ENCODE measurements at regions of chr3 and their contacts with region 1.

Region 1: GRCh38 chr3:69161587-69162307 is 39.4 kb upstream of the LMOD3 start:
- DNase-seq: no peak
- H3K4me3 ChIP-seq: no peak overlapping the region
- H3K27ac ChIP-seq: no peak overlapping the region
- H3K4me1 ChIP-seq: no peaks in the 10 kb centered on the region; a peak in 1 of 7 replicates
- H3K27me3 ChIP-seq: no peaks in the 10 kb centered on the region
- CTCF ChIP-seq: peak in 2 of 3 experiments; percentile 83 to 84; a peak in 3 of 4 replicates
- EP300 ChIP-seq: no peak
- POLR2A ChIP-seq: no peak
- RAD21 ChIP-seq: peak; percentile 96 to 98

Region 2: DNA sequence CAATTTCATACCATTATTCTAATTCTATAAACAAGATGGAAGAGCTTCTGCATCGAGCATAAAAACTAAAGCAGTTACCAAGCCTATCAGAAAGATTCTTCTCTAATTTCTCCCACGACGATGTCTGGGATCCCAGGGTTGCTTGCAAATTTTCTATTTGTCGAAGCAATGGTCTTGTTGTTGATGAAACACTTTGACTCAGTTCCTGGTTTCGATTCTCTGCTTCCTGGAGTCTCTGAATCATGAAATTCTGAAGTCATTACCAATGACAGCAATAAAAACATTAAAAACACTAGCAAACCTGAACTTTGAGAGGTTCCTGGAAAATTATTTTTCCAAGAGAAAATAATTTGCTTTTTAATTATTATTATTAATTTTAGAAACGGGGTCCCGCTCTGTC is 128.3 kb before region 1 on chr3:
- CTCF ChIA-PET with region 1: no interaction called
- POLR2A ChIA-PET with region 1: no interaction called
- DNase-seq: no peak
- H3K4me3 ChIP-seq: no peak overlapping the region
- H3K27ac ChIP-seq: no peak overlapping the region
- H3K4me1 ChIP-seq: no peaks in the 10 kb centered on the region
- H3K27me3 ChIP-seq: no peaks in the 10 kb centered on the region
- CTCF ChIP-seq: no peak
- EP300 ChIP-seq: no peak
- POLR2A ChIP-seq: no peak
- RAD21 ChIP-seq: no peak

Region 3: GRCh38 chr3:69120879-69121464 is 40.8 kb before region 1 on chr3:
- CTCF ChIA-PET with region 1: interaction called, 21 read pairs
- POLR2A ChIA-PET with region 1: no interaction called
- DNase-seq: peak; percentile 70 to 91
- H3K4me3 ChIP-seq: no peak overlapping the region
- H3K27ac ChIP-seq: no peak overlapping the region
- H3K4me1 ChIP-seq: no peaks in the 10 kb centered on the region
- H3K27me3 ChIP-seq: no peaks in the 10 kb centered on the region
- CTCF ChIP-seq: peak in 2 of 3 experiments; percentile 81 to 95; a peak in 3 of 4 replicates
- EP300 ChIP-seq: no peak
- POLR2A ChIP-seq: no peak
- RAD21 ChIP-seq: peak; percentile 91 to 92

Region 4: GRCh38 chr3:69174871-69175737 is 13.4 kb after region 1 on chr3:
- CTCF ChIA-PET with region 1: interaction called, 56 read pairs
- POLR2A ChIA-PET with region 1: no interaction called
- DNase-seq: no peak
- H3K4me3 ChIP-seq: no peak overlapping the region
- H3K27ac ChIP-seq: no peak overlapping the region
- H3K4me1 ChIP-seq: peaks cover 0 to 5% (median 0%) of the 10 kb centered on the region in 4 experiments; a peak in 2 of 7 replicates
- H3K27me3 ChIP-seq: no peaks in the 10 kb centered on the region
- CTCF ChIP-seq: no peak
- EP300 ChIP-seq: no peak
- POLR2A ChIP-seq: no peak
- RAD21 ChIP-seq: no peak

Region 5: GRCh38 chr3:69236812-69237707 is 75.3 kb after region 1 on chr3:
- CTCF ChIA-PET with region 1: interaction called, 19 read pairs
- POLR2A ChIA-PET with region 1: no interaction called
- DNase-seq: no peak
- H3K4me3 ChIP-seq: no peak overlapping the region
- H3K27ac ChIP-seq: no peak overlapping the region
- H3K4me1 ChIP-seq: peaks cover 0 to 16% (median 10%) of the 10 kb centered on the region in 4 experiments; a peak in 5 of 7 replicates
- H3K27me3 ChIP-seq: no peaks in the 10 kb centered on the region
- CTCF ChIP-seq: no peak
- EP300 ChIP-seq: peak in 1 of 2 experiments; percentile 99; a peak in 1 of 3 replicates
- POLR2A ChIP-seq: no peak
- RAD21 ChIP-seq: no peak

Region 6: DNA sequence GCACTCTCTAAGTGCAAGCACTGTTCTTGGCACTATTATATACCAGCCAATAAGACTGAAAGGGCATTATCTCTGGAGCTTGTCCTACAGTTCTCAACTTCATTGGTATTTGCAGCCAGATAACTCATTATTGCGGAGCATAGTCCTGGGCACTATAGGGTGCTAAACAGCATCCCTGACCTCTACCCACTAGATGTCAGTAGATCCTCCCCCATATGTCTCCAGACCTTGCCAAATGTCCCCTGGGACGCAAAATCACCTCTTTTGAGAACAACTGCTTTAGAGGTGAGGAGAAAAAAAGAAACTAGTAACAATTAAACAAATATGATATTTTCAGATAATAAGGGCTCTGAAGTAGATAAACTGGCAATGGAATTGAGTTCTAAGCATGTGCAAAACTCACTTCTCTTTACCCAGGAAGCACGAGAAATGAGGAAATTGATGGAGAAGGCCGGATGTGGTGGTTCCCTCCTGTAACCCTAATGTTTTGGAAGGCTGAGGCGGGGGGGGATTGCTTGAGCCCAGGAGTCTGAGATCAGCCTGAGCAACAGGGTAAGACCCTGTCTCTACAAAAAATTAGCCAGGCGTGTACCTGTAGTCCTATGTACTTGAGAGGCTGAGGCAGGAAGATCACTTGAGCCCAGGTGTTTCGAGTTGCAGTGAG is 162.7 kb after region 1 on chr3:
- CTCF ChIA-PET with region 1: interaction called, 15 read pairs
- POLR2A ChIA-PET with region 1: no interaction called
- DNase-seq: peak in 1 of 2 experiments; percentile 5
- H3K4me3 ChIP-seq: no peak overlapping the region
- H3K27ac ChIP-seq: no peak overlapping the region
- H3K4me1 ChIP-seq: peaks cover 0 to 4% (median 0%) of the 10 kb centered on the region in 4 experiments; a peak in 1 of 7 replicates
- H3K27me3 ChIP-seq: no peaks in the 10 kb centered on the region; a peak in 1 of 7 replicates
- CTCF ChIP-seq: peak; percentile 49 to 83 (median 74)
- EP300 ChIP-seq: no peak
- POLR2A ChIP-seq: no peak
- RAD21 ChIP-seq: peak; percentile 88 to 94

Region 7: DNA sequence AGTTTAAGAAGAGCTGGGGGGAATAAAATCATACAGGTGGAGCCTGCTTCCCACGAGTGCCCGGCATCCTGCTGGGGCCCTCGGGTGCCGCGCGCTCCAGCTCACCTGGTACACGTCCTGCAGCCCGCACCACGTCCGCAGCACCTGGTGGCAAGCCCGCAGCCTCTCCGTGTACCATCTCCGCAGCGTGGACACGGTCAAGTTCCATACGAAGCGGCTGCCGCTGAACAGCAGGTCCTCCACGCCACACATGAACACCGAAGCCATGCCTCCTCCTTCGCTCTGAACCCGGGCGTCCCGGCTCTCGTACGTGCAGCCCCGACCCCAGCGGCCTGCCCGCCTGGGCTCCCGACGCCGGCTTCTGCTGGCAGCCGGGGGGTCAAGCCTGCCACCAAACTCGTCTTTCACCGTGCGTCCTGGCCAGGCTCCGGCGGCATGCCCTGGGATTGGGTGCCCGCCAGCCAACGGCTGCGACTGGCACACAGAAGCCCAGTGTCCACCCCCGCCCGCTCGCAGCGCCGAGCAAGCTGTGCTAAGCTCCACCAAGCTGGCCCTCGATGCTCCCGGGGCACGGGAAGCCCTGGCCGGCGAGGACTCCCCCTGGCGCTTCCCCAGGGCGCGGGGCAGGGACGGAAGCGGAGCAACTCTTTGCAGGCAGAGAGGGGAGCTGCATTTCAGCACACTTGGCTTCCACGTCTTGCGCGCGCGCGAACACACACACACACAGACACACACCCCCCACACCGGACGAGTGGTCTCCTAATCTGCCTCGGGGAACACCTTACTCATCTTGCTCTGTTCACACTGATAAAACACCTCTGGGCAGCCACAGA is 224.2 kb after region 1 on chr3 and contains the start of gene FRMD4B:
- CTCF ChIA-PET with region 1: interaction called, 14 read pairs
- POLR2A ChIA-PET with region 1: no interaction called
- DNase-seq: peak in 1 of 2 experiments; percentile 74
- H3K4me3 ChIP-seq: peak within 1 kb of the TSS; percentile 30 to 61 (median 58)
- H3K27ac ChIP-seq: no peak within 1 kb of the TSS
- H3K4me1 ChIP-seq: peaks cover 0 to 4% (median 1%) of the 10 kb centered on the region in 4 experiments; a peak in 3 of 7 replicates
- H3K27me3 ChIP-seq: peaks cover 5 to 20% (median 15%) of the 10 kb centered on the region in 4 experiments
- CTCF ChIP-seq: no peak
- EP300 ChIP-seq: no peak
- POLR2A ChIP-seq: no peak
- RAD21 ChIP-seq: no peak
- total RNA-seq, gene FRMD4B: 5.4 and 7.2 TPM in 2 replicates

Region 8: DNA sequence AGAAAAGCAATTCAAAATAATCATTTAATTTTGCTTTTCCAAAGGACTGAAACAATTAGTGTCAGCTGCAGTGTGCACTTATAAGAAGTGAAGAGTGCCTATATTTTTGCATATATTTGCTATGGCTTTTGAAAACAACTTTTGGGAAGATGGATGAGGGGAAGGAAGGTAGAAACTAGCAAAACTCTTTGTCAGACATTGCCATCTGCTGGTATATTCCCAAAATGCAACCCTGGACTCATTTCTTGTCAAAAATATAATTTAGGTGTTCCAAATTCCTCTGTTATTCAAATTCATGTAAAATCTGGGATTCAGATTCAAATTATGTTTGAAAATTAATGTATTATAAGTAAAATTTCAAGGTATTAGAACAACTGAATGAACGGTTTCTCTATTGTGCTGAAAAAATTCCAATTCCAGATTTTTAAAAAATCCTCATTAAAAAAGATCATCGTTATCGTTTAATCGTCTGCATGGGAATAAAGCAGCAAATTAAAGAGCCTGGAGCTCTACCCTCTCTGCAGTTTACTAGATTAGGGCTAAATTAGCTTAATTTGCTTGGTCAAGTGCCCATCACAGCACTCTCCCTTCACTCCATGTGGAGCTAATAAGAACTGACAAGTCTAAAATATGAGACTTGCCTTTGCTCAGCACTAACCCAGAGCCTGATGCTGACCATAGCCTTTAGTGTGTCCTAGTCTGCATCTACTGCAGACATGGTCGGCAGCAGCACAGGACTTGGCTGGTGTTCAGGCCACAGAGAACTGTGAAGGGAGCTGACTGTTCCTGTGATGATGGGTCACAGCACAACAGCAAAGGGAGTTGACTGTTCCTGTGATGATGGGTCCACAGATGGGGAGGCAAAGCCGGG is 509.6 kb after region 1 on chr3:
- CTCF ChIA-PET with region 1: interaction called, 38 read pairs
- POLR2A ChIA-PET with region 1: no interaction called
- DNase-seq: no peak
- H3K4me3 ChIP-seq: no peak overlapping the region
- H3K27ac ChIP-seq: no peak overlapping the region
- H3K4me1 ChIP-seq: no peaks in the 10 kb centered on the region
- H3K27me3 ChIP-seq: no peaks in the 10 kb centered on the region
- CTCF ChIP-seq: peak in 2 of 3 experiments; percentile 52 to 58; a peak in 2 of 4 replicates
- EP300 ChIP-seq: no peak
- POLR2A ChIP-seq: no peak
- RAD21 ChIP-seq: peak; percentile 85 to 87